Psoas muscle (tissue), 8 donors: ENCODE measurements at regions of chr12 and their contacts with region 1.

Region 1: GRCh38 chr12:9064815-9065606 is 50.7 kb downstream of the A2M start:
- DNase-seq: peak; percentile 78 to 83
- ATAC-seq: peak; percentile 91 to 94 (median 92)
- H3K4me3 ChIP-seq: peak overlapping the region; percentile 84
- H3K27ac ChIP-seq: peak overlapping the region; percentile 89
- H3K4me1 ChIP-seq: peaks cover 10% of the 10 kb centered on the region
- H3K27me3 ChIP-seq: no peaks in the 10 kb centered on the region
- CTCF ChIP-seq: no peak

Region 2: DNA sequence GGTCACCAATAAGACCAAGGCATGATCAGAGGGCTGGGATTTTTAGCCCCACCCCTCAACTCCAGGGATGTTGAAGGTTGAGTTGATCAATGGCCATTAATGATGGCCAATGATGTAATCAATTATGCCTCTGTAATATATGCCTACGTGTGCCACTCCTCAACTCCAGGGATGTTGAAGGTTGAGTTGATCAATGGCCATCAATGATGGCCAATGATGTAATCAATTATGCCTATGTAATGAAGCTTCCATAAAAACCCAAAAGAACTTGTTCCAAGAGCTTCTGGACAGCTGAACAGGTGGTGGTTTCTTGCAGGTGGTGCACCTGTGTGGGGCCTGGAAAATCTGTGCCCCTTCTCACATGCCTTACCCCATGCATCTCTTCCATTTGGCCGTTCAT is 42.4 kb before region 1 on chr12:
- intact Hi-C with region 1: no loop called
- DNase-seq: no peak
- ATAC-seq: no peak
- H3K4me3 ChIP-seq: no peak overlapping the region
- H3K27ac ChIP-seq: no peak overlapping the region
- H3K4me1 ChIP-seq: no peaks in the 10 kb centered on the region
- H3K27me3 ChIP-seq: no peaks in the 10 kb centered on the region
- CTCF ChIP-seq: no peak

Region 3: GRCh38 chr12:9103050-9103849 is 38.2 kb after region 1 on chr12:
- intact Hi-C with region 1: loop called in 1 of 2 experiments (anchors 5 kb)
- DNase-seq: no peak
- ATAC-seq: no peak
- H3K4me3 ChIP-seq: no peak overlapping the region
- H3K27ac ChIP-seq: no peak overlapping the region
- H3K4me1 ChIP-seq: no peaks in the 10 kb centered on the region
- H3K27me3 ChIP-seq: no peaks in the 10 kb centered on the region
- CTCF ChIP-seq: no peak

Region 4: GRCh38 chr12:9115731-9116559 is 50.9 kb after region 1 on chr12 and contains the start of gene A2M:
- intact Hi-C with region 1: loop called in 1 of 2 experiments (anchors 5 kb)
- DNase-seq: no peak
- ATAC-seq: peak; percentile 66 to 85 (median 84)
- H3K4me3 ChIP-seq: peak within 1 kb of the TSS; percentile 58
- H3K27ac ChIP-seq: peak within 1 kb of the TSS; percentile 71
- H3K4me1 ChIP-seq: peaks cover 36% of the 10 kb centered on the region
- H3K27me3 ChIP-seq: no peaks in the 10 kb centered on the region
- CTCF ChIP-seq: no peak
- total RNA-seq, gene A2M: 86.0 to 242 (median 123) TPM